Posterior vena cava (tissue), 2 donors: ENCODE measurements at regions of chr20 and their contacts with region 1.

Region 1: DNA sequence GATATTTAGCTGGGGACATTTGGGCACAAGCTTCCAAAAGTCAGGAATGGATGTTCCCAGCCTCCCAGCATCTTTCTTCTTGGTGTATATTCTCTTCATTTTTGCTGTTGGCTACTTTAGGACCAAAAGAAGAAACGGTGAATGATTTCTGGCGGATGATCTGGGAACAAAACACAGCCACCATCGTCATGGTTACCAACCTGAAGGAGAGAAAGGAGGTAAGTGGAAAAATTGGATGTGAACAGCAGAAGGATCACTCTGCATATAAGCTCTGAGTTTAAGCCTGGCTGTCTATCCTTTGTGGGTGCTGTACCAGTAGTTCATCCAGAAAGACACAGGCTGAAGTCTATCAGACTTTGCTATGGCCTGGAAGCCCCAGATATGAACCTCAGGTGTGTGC is 25.7 kb upstream of the GNRH2 start:
- DNase-seq: no peak

Region 2: GRCh38 chr20:2780948-2781347 is 236.7 kb before region 1 on chr20:
- intact Hi-C with region 1: no loop called
- DNase-seq: no peak

Region 3: DNA sequence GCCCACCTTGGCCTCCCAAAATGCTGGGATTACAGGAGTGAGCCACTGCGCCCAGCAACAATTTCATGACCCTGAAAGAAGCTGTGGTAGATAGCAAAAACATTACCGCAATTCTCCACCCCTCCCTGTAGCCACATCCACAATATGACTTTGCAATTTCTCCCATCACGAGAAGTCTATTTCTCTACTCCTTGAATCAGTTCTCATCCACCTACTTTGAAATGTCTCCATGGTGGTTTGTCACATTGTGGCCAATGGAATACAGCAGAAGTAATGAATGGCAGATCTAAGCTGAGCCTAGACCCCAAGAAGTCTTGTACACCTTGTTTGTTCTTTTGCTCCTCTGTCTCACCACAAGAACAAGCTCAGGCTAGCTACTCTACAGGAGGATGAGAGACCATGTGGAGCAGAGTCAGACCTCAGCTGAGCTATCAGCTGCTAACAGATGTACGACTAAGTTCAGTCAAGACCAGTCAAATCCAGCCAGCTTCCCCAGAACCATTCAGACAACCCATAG is 60.0 kb after region 1 on chr20:
- intact Hi-C with region 1: loop called in 1 of 2 experiments (anchors 2 kb)
- DNase-seq: peak; percentile 7